GM10248 (cell line): ENCODE measurements at regions of chr7 and their contacts with region 1.

Region 1: GRCh38 chr7:142811154-142811737 is 40.5 kb downstream of the PRSS2 start:
- DNase-seq: no peak
- CTCF ChIP-seq: peak; percentile 71

Region 2: DNA sequence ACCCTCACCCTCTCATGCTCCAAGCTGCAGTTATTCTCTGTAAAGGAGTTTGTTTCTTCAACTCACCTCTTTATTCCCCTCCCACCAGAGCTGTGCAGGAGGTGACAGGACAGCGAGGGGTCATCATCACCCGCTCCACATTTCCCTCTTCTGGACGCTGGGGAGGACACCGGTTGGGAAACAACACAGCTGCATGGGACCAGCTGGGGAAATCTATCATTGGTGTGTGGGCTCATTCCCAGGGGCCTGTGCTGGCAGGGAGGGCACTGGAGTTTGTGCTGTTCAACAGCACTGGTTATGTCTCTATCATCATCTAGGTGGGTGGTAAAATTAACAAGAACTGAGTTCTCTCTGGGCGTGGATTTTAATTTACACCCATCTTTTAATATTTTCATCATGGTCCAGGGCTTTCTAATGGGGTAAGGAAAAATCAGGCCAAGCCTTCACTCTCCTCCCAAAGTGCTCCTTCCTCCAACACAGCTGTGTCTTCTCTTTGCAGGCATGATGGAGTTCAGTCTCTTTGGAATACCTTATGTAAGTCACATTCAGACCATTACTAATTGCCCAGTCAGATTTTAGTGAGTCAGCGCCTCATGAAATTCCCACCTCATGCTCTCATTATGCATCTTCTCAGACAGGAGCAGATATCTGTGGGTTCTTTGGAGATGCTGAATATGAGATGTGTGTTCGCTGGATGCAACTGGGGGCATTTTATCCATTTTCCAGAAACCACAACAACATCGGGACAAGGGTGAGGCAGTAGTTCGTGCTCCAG is 615.0 kb before region 1 on chr7:
- CTCF ChIA-PET with region 1: no interaction called
- POLR2A ChIA-PET with region 1: no interaction called
- DNase-seq: no peak
- CTCF ChIP-seq: no peak

Region 3: GRCh38 chr7:142626420-142627035 is 184.7 kb before region 1 on chr7:
- CTCF ChIA-PET with region 1: interaction called, 191 read pairs
- POLR2A ChIA-PET with region 1: no interaction called
- DNase-seq: peak; percentile 49
- CTCF ChIP-seq: peak; percentile 61

Region 4: GRCh38 chr7:142669074-142669654 is 142.1 kb before region 1 on chr7:
- CTCF ChIA-PET with region 1: interaction called, 31 read pairs
- POLR2A ChIA-PET with region 1: no interaction called
- DNase-seq: no peak
- CTCF ChIP-seq: peak; percentile 23

Region 5: DNA sequence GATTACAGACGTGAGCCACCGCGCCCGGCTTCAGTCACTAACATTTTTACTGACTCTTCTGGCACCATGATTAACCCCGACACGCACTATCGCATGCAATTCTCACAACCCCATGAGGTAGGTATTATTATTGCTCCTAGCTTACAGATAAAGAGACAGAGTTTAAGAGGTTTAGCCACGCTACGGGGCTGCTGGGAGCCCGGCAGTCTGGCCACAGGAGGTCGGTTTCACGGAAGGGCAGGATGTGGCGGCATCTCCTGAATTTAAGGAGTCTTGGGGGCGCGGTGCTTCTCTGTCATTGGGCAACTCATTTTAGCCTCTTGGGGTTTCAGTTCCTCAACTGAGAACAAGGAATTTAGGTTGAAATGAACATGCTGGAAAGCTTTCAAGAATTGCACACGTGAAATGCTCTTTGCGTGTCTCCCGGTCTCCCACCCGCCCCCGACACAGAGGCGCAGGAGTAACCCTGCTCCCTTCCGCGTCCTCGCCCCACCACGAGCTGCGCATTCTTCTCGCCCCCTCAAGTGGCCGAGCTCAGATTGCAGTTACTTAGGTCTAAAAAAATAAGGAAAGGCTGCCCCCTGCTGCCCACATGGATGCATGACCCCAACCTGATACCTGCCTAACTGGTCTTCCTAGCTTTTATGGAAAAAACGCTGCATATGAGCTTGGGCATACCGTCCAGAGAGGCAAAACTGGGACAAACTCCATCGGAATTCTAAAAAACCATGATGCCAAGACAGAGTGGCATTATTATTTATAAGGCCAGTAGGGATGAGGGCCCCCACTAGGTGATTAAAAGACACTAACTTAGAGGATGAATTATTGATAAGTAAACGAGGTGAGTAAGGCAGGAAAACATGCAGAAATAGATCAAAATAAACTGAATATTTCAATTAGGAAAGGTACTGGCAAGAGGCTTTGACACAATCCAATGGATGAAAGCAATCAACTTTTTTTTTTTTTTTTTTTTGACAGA is 28.0 kb before region 1 on chr7:
- CTCF ChIA-PET with region 1: interaction called, 316 read pairs
- POLR2A ChIA-PET with region 1: interaction called, 10 read pairs
- DNase-seq: peak; percentile 84
- CTCF ChIP-seq: peak; percentile 96

Region 6: DNA sequence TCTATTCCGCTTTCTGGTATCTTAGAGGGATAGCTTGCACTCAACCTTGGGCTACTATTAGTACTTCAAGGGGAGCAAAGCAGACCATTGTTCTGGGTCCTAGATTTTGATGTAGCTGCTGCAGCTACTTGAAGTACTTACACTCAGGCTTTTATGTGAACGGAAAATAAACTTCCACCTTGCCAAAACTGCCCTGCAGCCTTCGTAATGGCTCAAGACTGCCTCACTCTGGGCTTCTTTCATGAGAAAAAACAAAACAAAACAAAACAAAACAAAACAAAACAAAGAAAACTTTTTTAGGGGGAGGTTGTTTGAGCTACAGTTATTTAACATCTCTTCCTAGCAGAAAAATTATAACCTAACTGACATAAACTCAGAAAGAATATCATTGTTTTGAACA is 24.2 kb after region 1 on chr7:
- CTCF ChIA-PET with region 1: interaction called, 12 read pairs
- POLR2A ChIA-PET with region 1: no interaction called
- DNase-seq: no peak
- CTCF ChIP-seq: no peak